Activated CD4-positive, alpha-beta T cell treated with anti-CD3 and anti-CD28 coated beads for 36 hours (primary cell): ENCODE measurements at regions of chr3 and their contacts with region 1.

Region 1: DNA sequence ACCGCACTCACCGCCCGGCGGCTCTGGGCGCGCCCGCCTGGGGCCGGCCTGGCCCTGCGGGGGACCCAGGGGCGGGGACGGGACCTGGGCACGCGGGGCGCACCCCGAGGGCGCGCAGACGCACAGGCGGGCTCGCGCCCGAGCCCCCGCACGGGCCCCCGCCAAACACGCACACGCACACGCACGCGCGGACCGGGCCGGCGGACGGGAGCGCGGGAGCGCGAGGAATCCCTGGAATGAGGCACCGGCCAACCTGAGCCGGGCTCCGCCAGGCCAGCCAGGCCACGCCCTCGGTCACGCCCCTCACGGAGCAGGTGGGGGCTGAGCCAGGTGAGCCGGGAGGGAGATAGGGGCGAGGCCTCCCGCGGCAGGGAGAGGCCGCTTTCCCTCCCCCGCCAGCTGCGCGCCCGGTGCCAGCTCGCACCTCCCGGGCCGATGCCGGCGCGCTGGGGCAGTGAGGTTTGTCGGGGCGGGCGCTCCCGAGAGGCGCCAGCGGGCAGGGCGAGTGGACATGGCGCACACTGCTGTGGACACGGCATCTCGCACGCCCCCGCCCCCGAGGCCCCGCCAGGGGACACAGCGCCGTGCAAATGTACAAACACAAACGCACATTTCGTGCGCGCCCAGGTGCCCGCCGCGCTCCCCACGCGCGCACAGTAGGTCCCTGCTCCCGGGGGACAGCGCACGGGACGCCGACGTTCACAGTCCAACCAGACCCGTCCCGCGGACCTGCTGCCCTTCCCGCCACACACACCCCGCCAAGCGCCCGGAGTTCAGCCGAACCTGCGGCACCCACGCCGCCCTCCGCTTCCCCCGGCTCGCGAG is 75.9 kb upstream of the VGLL4 start:
- DNase-seq: peak; percentile 86
- ATAC-seq: peak; percentile 64
- H3K4me3 Mint-ChIP-seq: peak overlapping the region; percentile 91
- H3K27ac Mint-ChIP-seq: no peak overlapping the region
- H3K4me1 Mint-ChIP-seq: peaks cover 23% of the 10 kb centered on the region
- H3K27me3 Mint-ChIP-seq: peaks cover 11% of the 10 kb centered on the region

Region 2: DNA sequence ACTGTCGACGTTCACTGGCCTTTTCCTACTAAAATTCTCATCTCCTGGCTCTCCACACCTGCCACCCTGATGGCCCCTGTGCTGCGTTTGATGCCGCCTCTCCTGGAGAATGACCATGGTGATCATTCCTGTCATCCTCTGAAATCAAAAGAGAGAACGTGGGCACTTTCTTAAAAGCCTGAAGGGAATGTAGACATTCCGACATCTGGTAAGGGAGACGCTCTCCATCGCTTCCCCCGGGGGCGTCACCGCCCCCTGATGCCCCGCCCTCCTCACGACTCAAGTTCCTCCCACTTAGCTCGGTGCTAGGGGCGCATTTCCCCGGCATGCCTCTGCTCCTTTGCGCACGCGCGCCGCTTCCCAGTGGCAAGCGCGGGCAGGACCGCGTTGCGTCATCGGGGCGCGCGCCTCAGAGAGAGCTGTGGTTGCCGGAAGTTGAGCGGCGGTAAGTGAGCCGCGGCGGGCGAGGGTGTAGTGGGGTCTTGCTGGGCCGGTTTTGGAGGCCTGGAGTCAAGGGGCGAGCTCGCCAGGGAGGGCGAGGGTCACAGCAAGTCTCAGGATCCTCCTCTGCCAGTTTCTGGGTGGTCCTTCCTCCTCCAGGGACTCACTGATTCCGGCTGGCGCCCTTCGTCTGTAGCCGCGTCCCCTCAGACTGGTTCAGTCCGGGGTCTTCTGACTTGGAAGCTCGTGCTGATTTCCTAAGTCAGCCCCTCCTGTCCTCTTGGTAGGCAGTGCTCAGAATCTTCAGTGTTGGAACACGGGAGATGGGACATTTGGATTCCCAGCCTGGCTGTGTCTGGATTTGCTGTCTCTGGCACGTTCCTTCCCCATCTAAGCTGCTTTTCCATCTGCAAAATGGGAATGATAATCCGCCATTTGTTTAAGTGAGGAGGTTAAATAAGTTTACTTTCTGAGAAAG is 447.4 kb before region 1 on chr3 and contains the start of gene ATG7:
- CTCF ChIA-PET with region 1: no interaction called
- POLR2A ChIA-PET with region 1: interaction called, 12 read pairs
- intact Hi-C with region 1: loop called in 1 of 2 experiments (anchors 1 kb)
- DNase-seq: peak; percentile 98
- ATAC-seq: peak; percentile 97
- H3K4me3 Mint-ChIP-seq: peak within 1 kb of the TSS; percentile 93
- H3K27ac Mint-ChIP-seq: peak within 1 kb of the TSS; percentile 94
- H3K4me1 Mint-ChIP-seq: peaks cover 45% of the 10 kb centered on the region
- H3K27me3 Mint-ChIP-seq: no peaks in the 10 kb centered on the region
- total RNA-seq, gene ATG7: 31.6 to 34.5 TPM

Region 3: GRCh38 chr3:11643605-11644087 is 76.0 kb before region 1 on chr3 and contains the start of gene VGLL4:
- CTCF ChIA-PET with region 1: interaction called, 4 read pairs
- POLR2A ChIA-PET with region 1: no interaction called
- intact Hi-C with region 1: loop called (anchors 1 to 5 kb)
- DNase-seq: peak; percentile 85
- ATAC-seq: peak; percentile 74
- H3K4me3 Mint-ChIP-seq: peak within 1 kb of the TSS; percentile 99
- H3K27ac Mint-ChIP-seq: peak within 1 kb of the TSS; percentile 99
- H3K4me1 Mint-ChIP-seq: peaks cover 33% of the 10 kb centered on the region
- H3K27me3 Mint-ChIP-seq: no peaks in the 10 kb centered on the region
- total RNA-seq, gene VGLL4: 24.4 to 24.9 TPM

Region 4: GRCh38 chr3:11770477-11771391 is 51.1 kb after region 1 on chr3:
- CTCF ChIA-PET with region 1: no interaction called
- POLR2A ChIA-PET with region 1: no interaction called
- intact Hi-C with region 1: loop called (anchors 1 to 5 kb)
- DNase-seq: peak; percentile 88
- ATAC-seq: peak; percentile 100
- H3K4me3 Mint-ChIP-seq: peak overlapping the region; percentile 13
- H3K27ac Mint-ChIP-seq: peak overlapping the region; percentile 75
- H3K4me1 Mint-ChIP-seq: peaks cover 20% of the 10 kb centered on the region
- H3K27me3 Mint-ChIP-seq: no peaks in the 10 kb centered on the region

Region 5: GRCh38 chr3:11846281-11847034 is 126.8 kb after region 1 on chr3 and contains the start of gene TAMM41:
- CTCF ChIA-PET with region 1: no interaction called
- POLR2A ChIA-PET with region 1: no interaction called
- intact Hi-C with region 1: loop called (anchors 1 to 2 kb)
- DNase-seq: peak; percentile 95
- ATAC-seq: peak; percentile 100
- H3K4me3 Mint-ChIP-seq: peak within 1 kb of the TSS; percentile 97
- H3K27ac Mint-ChIP-seq: peak within 1 kb of the TSS; percentile 91
- H3K4me1 Mint-ChIP-seq: peaks cover 31% of the 10 kb centered on the region
- H3K27me3 Mint-ChIP-seq: no peaks in the 10 kb centered on the region
- total RNA-seq, gene TAMM41: 26.3 to 30.2 TPM

Region 6: GRCh38 chr3:11995120-11995519 is 275.5 kb after region 1 on chr3:
- CTCF ChIA-PET with region 1: no interaction called
- POLR2A ChIA-PET with region 1: no interaction called
- intact Hi-C with region 1: no loop called
- DNase-seq: no peak
- ATAC-seq: no peak
- H3K4me3 Mint-ChIP-seq: no peak overlapping the region
- H3K27ac Mint-ChIP-seq: no peak overlapping the region
- H3K4me1 Mint-ChIP-seq: no peaks in the 10 kb centered on the region
- H3K27me3 Mint-ChIP-seq: peaks cover 21% of the 10 kb centered on the region